ENCODE measurements at regions of chr2 and their contacts with region 1.

Region 1: DNA sequence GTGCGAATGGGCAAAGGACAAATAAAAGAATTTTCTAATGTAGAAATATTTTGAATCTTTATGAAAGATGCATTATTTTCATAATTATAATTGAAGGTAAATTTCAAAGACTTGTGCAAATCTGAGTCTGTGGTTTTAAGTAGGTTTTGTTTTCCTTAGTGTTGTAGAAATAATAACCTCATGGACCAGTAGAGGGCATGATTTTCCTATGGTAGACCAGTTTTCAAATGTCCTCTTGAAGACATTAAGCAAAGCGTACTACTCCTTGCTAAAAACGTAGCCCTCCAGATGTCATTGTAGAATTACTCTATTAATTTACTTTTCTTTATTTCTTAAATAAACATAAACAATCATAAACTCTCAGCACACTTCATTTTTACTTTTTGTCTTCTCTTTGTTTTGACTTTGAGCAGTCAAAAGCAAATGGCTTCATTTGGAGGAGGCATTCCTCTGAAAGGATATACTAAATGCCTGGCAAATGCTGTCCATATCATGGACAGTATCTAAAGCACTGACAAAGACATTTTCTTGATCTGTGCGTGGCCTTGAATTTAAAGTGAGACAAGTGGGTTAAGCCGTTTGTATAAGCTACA is 85.8 kb upstream of the FAM237A start:
- H3K4me3 ChIP-seq: no peak overlapping the region
- H3K27ac ChIP-seq: no peak overlapping the region
- H3K4me1 ChIP-seq: no peaks in the 10 kb centered on the region
- CTCF ChIP-seq: no peak

Region 2: DNA sequence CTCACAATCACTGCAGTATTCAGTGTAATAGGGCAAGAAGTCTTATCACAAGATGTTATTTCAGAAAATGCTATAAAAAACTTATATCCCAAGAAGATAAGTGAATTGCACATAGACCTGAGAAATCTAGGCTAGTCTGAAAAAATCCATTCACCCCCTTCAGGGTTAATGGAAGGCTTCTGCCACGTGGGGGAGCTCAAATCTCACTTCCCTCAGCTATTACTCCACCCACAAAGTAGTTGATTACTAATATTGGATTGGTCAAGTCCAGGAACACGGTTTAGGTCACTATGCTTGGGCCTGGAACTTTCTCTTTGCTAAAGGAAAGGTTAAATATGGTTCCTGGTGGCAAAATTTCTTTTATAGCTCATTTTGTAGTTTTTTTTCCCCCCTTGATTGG is 164.3 kb before region 1 on chr2:
- CTCF ChIA-PET with region 1: interaction called, 26 read pairs
- POLR2A ChIA-PET with region 1: no interaction called
- H3K4me3 ChIP-seq: no peak overlapping the region
- H3K27ac ChIP-seq: no peak overlapping the region
- H3K4me1 ChIP-seq: no peaks in the 10 kb centered on the region
- CTCF ChIP-seq: no peak

Measured in HEK293 (cell line).